H1 (cell line): ENCODE measurements at regions of chr16 and their contacts with region 1.

Region 1: DNA sequence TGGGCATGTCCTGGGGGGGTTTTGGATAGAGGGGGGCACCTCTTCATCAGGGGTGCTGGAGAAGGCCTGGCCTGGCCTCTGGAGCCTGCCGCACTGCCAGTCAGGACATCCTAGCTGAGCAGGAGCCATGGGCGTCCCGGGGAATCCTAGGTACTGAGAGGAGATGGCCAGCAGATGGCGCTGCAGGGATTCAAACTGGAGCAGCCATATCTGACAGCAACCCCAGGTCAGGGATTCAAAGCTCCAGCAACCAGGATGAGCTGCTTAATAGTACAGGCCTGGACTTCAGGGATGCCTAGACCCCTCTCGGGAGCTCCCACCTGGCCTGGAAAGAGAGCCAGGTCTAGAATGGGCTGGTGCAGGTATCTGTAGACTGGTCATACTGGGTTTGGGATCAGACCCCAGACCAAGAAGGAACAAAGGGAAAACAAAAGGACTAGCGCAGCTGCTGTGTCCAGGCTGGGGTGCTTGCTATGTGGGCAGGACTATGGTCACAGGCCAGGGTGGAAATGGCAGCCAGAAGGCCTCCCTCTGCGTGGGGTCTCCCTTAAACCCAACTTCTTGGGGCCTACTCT is 306.9 kb upstream of the RBFOX1 start:
- DNase-seq: peak; percentile 72 to 94
- H3K4me3 ChIP-seq: no peak overlapping the region
- H3K27ac ChIP-seq: no peak overlapping the region; the same call in 1 of the 2 replicates
- H3K4me1 ChIP-seq: peaks cover 0 to 5% (median 2%) of the 10 kb centered on the region in 4 experiments; a peak in 4 of 7 replicates
- H3K27me3 ChIP-seq: no peaks in the 10 kb centered on the region
- CTCF ChIP-seq: peak; percentile 79 to 89 (median 81)
- EP300 ChIP-seq: no peak
- POLR2A ChIP-seq: no peak
- RAD21 ChIP-seq: peak; percentile 87 to 92

Region 2: DNA sequence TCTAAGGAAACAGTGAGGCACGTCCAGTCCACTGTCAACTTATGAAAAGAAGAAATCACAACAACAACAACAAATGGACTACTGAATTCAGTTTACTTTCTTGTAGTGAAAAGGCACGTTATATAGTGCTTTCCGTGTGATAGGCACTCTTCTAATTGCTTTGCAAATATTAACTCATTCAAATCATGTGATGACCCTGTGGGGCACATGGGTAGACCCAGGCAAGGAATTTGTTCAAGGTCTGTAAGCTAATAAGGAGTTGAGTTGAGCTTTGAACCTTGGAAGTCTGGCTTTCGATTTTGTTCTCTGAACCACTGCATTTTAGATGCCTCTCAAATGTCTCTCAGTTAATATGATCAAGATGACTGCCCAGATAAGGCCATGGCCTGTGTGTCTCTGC is 11.8 kb after region 1 on chr16:
- CTCF ChIA-PET with region 1: interaction called, 12 read pairs
- POLR2A ChIA-PET with region 1: no interaction called
- DNase-seq: no peak
- H3K4me3 ChIP-seq: no peak overlapping the region
- H3K27ac ChIP-seq: no peak overlapping the region
- H3K4me1 ChIP-seq: peaks cover 0 to 4% (median 0%) of the 10 kb centered on the region in 4 experiments; a peak in 2 of 7 replicates
- H3K27me3 ChIP-seq: no peaks in the 10 kb centered on the region
- CTCF ChIP-seq: no peak
- EP300 ChIP-seq: no peak
- POLR2A ChIP-seq: no peak
- RAD21 ChIP-seq: no peak

Region 3: DNA sequence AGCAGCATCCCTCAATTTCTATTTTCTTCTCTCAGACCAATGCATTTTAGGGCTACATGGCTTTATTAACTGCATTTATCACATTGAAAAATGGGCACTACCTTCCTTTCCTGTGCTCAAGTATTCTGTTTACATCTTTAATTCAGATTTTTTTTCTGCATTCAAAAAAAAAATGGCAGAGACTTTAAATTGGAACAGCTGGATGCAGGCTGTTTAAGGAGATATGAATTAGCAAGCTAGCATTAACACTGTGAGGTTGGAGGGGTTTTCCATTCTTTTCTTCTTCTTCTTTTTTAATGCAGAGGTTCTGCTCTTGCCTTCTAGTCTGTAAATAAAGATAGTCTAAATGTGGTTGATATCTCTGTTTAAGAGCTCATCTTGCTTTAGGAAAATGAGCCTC is 64.0 kb after region 1 on chr16:
- CTCF ChIA-PET with region 1: no interaction called
- POLR2A ChIA-PET with region 1: no interaction called
- DNase-seq: no peak
- H3K4me3 ChIP-seq: no peak overlapping the region
- H3K27ac ChIP-seq: no peak overlapping the region
- H3K4me1 ChIP-seq: peaks cover 0 to 16% (median 4%) of the 10 kb centered on the region in 4 experiments; a peak in 5 of 7 replicates
- H3K27me3 ChIP-seq: no peaks in the 10 kb centered on the region
- CTCF ChIP-seq: no peak
- EP300 ChIP-seq: no peak
- POLR2A ChIP-seq: no peak
- RAD21 ChIP-seq: no peak